Sigmoid colon (tissue), 7 donors: ENCODE measurements at regions of chr1 and their contacts with region 1.

Region 1: DNA sequence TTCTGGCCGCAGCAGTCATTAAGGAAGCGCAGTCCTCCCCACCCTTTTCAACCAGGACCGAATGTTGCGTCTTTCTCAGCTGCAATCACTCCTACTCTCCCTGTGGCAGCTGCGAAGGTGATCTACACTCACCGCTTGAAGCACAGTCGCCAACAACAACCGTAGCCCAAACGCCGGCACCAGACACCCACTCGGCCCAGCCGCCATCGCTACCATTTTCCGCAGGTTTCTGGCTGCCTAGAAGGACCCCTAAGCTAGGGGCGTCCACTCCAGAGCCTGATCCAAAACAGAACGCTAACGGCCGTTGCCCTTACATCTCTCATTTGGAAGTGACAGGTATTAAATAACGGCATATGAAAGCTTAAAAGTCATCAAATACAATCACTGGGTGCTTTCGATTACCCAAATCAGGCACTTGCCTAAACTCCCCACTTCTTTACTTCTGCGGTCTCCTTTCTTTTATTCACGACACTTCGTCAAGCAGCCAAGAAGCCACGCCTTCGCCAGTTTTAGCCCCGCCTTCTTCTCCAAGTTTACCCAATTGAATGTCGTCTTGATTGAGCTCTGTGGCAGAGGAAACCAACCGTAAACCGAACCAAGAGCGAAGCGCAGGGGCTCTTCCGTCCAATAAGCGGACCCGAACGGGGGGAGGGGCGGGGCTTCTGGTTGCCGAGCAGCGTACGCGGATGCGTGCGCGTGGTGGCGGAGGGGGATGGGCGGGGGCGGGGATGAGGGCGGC is at the start of gene SELENOF:
- DNase-seq: peak; percentile 99
- H3K4me3 ChIP-seq: peak within 1 kb of the TSS; percentile 78 to 98 (median 87)
- H3K27ac ChIP-seq: peak within 1 kb of the TSS; percentile 89 to 94 (median 91)
- H3K4me1 ChIP-seq: peaks cover 0 to 36% (median 19%) of the 10 kb centered on the region in 4 donors
- H3K27me3 ChIP-seq: no peaks in the 10 kb centered on the region
- CTCF ChIP-seq: no peak
- EP300 ChIP-seq: no peak
- POLR2A ChIP-seq: no peak
- total RNA-seq, gene SELENOF: 66.7 to 110 (median 84.1) TPM

Region 2: DNA sequence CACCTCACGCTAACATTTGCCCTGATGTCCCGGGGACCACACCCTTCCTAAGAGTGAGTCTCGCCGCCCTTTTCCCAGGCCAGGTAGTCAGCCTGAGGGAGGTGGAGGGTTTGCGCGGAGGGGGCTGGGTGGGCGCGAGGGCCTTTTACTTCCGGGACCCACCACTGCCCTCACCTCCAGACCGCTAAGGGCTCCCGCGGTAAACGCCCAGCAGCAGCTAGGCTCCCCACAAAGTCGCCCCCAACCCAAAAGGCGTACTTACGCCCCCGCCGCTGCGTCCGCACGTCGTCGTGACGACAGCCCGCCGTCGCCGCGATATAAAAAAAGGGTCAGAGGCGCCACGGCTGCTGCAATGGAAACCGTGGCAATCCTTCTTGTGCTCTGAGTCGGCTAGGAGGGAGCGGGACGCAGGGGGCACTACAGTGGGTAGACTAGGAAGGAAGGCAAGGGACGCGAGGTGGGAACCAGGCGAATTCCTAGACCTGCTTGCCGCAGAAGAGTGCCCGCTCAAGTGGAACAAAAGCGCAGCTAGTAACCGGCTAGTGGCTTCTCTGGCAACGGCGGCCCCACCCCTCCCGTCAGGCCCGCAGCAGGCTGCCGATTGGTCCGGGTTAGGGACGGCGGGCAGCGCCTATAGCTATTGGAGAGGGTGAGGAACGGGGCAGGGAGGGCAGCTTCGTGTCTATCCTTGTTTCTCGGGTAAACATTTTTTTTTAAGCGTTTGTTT is 518.1 kb before region 1 on chr1 and contains the start of gene ODF2L:
- intact Hi-C with region 1: loop called (anchors 5 kb)
- DNase-seq: peak; percentile 95
- H3K4me3 ChIP-seq: peak within 1 kb of the TSS; percentile 67 to 88 (median 78)
- H3K27ac ChIP-seq: peak within 1 kb of the TSS; percentile 71 to 85 (median 78)
- H3K4me1 ChIP-seq: peaks cover 0 to 25% (median 12%) of the 10 kb centered on the region in 4 donors
- H3K27me3 ChIP-seq: no peaks in the 10 kb centered on the region
- CTCF ChIP-seq: no peak
- EP300 ChIP-seq: no peak
- POLR2A ChIP-seq: peak; percentile 42 to 49
- total RNA-seq, gene ODF2L: 27.8 to 55.1 (median 30.2) TPM

Region 3: DNA sequence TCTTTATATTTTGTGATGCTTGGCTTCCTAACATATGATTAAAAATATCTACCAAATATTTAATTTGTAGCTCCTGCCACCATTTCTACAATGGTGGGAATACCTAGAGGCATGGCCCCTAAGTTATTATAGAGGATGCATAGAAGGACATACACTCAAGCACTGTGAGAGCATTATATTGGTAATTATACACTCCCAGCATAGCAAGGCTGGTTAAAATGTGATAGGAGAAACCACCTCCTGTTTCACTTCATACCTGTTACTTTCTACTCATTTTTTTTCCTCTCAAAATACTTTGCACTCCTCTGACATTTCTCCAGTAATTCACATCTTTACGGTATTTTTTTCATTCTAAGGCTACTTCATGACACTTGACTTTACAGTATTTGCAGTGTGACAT is 93.3 kb after region 1 on chr1:
- intact Hi-C with region 1: no loop called
- DNase-seq: no peak
- H3K4me3 ChIP-seq: no peak overlapping the region
- H3K27ac ChIP-seq: no peak overlapping the region
- H3K4me1 ChIP-seq: no peaks in the 10 kb centered on the region
- H3K27me3 ChIP-seq: no peaks in the 10 kb centered on the region
- CTCF ChIP-seq: no peak
- EP300 ChIP-seq: no peak
- POLR2A ChIP-seq: no peak